IMR-90 (cell line): ENCODE measurements at regions of chr9 and their contacts with region 1.

Region 1: GRCh38 chr9:26483991-26484390 is 408.6 kb downstream of the CAAP1 start:
- DNase-seq: no peak
- ATAC-seq: no peak
- H3K4me3 ChIP-seq: no peak overlapping the region
- H3K27ac ChIP-seq: no peak overlapping the region
- H3K4me1 ChIP-seq: no peaks in the 10 kb centered on the region
- H3K27me3 ChIP-seq: no peaks in the 10 kb centered on the region
- CTCF ChIP-seq: no peak
- POLR2A ChIP-seq: no peak
- RAD21 ChIP-seq: no peak

Region 2: DNA sequence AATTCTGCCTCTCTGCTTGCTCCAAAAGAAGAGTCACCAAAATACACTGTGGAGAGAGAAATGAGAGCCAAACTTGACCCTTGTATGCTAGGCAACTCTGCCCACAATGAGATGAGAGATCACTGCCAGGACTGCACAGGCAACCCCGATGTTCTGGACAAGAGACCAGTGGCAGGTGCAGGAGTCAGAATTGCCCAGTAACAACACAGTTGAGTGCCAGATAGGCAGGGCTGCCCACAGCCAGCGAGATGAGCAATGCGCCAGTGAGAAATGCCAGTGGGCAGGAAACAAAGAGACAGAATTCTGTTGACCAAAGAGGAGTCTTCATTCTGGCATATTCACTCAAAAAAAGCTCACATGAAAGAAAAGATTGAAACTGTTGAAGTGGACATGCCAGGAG is 162.1 kb before region 1 on chr9:
- CTCF ChIA-PET with region 1: no interaction called
- POLR2A ChIA-PET with region 1: no interaction called
- dilution Hi-C with region 1: no loop called
- in situ Hi-C with region 1: no loop called
- intact Hi-C with region 1: no loop called
- DNase-seq: no peak
- ATAC-seq: no peak
- H3K4me3 ChIP-seq: no peak overlapping the region
- H3K27ac ChIP-seq: no peak overlapping the region
- H3K4me1 ChIP-seq: peaks cover 2% of the 10 kb centered on the region; the same call in 1 of the 2 replicates
- H3K27me3 ChIP-seq: no peaks in the 10 kb centered on the region
- CTCF ChIP-seq: no peak
- POLR2A ChIP-seq: no peak
- RAD21 ChIP-seq: no peak

Region 3: DNA sequence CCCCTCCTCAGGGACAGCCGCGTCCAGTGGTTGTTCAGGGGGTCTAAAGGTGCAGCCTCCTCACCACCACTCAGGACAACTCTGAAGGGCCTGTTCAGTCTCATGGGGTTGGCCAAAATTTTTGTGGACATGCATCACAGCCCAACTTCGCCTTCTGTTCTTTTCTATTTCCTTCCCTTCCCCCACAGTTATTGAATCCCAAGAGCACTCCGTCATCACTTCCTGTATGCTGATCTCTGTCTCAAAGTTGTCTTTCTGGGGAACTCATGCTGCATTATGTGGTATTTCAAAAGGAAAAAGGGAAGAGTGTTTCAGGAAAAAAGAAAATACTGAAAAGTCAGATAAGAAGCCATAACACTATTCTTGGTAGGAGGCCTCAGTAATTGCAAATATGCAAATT is 53.2 kb after region 1 on chr9:
- CTCF ChIA-PET with region 1: no interaction called
- POLR2A ChIA-PET with region 1: no interaction called
- dilution Hi-C with region 1: no loop called
- in situ Hi-C with region 1: no loop called
- intact Hi-C with region 1: loop called (anchors 2 kb)
- DNase-seq: no peak
- ATAC-seq: no peak
- H3K4me3 ChIP-seq: no peak overlapping the region
- H3K27ac ChIP-seq: no peak overlapping the region
- H3K4me1 ChIP-seq: no peaks in the 10 kb centered on the region
- H3K27me3 ChIP-seq: no peaks in the 10 kb centered on the region
- CTCF ChIP-seq: no peak
- POLR2A ChIP-seq: no peak
- RAD21 ChIP-seq: no peak